ENCODE measurements at regions of chr9 and their contacts with region 1.

Region 1: DNA sequence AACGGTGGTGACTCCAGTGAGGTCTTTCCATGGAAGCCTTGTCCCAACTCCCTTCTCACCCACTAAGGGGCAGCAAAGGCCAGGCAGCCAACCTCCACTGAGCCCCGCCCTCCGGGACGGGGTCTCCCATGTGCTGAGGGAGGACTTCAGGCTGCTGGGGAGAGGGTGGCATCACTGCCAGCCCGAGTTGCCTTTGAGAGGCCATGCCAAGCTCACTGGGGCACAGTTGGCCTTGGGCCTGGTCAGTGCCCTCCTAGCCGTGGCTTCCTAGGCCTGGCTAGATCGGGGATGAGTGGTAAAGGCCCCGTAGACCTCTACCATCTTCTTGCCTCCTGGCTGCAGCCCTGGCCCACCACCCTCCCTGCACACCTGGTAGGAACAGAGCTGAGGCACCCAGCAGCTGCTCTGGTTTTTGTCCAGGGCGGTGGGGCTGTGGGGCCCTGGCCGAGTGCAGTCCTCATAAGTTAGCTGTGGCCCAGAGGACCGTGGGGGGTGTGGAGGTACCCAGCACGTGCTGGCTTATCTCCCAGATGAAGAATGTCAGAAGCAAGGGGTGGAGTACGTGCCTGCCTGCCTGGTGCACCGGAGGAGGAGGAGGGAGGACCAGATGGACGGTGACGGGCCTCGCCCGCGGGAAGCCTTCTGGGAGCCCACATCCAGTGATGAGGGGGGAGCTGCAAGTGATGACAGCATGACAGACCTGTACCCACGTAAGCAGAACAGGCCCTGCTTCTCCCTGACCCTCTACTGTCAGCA is 3.2 kb downstream of the SURF2 start:
- ATAC-seq: peak in 1 of 8 experiments; percentile 7
- H3K4me3 ChIP-seq: no peak overlapping the region
- H3K27ac ChIP-seq: no peak overlapping the region
- H3K4me1 ChIP-seq: peaks cover 15% of the 10 kb centered on the region in 2 donors

Region 2: DNA sequence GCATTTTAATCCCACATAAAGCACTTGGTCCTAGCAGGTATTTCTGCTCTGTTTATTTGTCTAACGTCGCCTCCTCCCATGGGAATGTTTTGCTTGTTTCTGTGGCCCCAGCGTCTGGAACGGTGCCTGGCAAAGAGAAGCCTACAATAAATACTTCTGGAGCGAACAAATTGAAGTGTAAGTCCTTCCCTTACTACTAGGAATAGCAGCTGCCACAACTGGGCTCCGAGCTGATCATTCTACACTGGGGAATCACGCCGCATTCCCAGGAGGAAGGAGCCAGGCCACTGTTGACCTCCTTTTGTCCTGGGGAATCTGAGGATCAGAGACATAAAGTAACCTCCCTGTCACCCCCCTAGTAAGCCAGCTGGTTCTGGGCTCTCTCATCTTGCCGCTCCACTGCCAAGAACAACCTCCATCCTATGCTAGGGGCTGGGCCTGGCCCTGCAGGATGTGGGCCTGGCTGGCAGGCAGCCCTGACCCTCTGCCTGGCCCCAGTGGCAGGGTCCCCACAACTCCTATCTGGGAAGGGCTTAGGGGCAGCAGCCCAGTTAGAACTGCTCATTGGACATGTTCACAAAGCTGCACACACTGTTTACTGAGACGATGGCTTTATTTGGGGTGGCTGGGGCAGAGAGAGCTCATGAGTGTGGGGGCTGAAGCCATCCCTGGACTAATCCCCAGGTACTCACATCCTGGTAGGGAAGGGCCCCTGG is 606.6 kb before region 1 on chr9:
- in situ Hi-C with region 1: no loop called
- ATAC-seq: peak in 1 of 8 experiments; percentile 41
- H3K4me3 ChIP-seq: no peak overlapping the region
- H3K27ac ChIP-seq: no peak overlapping the region
- H3K4me1 ChIP-seq: peaks cover 0 to 5% of the 10 kb centered on the region in 2 donors

Region 3: GRCh38 chr9:132877824-132878694 is 481.5 kb before region 1 on chr9 and contains the start of gene AK8:
- in situ Hi-C with region 1: no loop called
- ATAC-seq: peak; percentile 81 to 91 (median 86)
- H3K4me3 ChIP-seq: peak within 1 kb of the TSS; percentile 72 to 97 (median 84)
- H3K27ac ChIP-seq: no peak within 1 kb of the TSS
- H3K4me1 ChIP-seq: peaks cover 5 to 6% of the 10 kb centered on the region in 2 donors
- total RNA-seq, gene AK8: 0.64 to 6.6 (median 0.95) TPM

Region 4: DNA sequence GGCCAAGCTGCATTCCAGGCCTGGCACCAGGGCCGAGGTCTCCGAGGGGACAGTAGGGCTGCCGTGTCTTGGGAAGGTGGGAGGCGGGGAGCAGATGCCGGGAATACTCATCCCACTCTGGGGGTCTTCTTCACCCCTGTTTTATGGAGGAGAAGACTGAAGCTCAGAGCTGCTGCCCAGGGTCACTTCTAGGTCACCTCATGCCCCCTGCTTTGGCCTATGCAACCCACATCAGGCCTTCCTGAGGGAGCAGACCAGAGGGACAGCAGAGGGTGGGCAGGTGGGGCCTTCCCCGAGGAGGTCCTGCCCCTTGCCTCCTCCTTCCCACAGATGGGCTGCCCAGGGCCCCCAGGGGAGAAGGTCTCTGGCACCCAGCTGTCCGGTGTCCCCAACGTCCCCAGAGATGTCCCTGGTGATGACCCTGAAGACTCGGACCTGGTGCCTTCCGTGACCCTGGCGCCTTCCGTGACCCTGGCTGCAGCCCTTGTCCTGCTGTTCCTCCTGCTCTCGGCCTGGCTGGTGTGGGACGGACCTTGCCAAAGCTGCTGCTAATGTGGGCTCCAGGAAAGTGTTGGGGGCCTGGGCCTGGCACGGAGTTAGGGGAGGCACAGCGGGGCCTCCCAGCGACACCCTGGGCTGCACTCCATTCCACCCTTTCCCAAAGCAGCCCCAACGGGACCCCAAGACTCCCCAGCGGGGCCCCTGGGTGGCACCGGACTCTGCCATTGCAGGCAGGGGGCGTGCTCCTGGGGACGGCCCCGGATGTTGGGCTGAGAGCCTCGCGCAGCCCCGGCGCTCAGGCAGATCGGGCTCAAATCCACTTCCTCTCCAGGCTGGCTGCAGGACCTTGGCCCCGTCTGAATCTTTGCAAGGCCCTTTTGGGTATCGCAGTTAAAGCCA is 126.0 kb after region 1 on chr9:
- in situ Hi-C with region 1: loop called in 1 of 9 experiments (anchors 10 kb)
- ATAC-seq: peak in 5 of 8 experiments; percentile 6 to 67 (median 12)
- H3K4me3 ChIP-seq: no peak overlapping the region
- H3K27ac ChIP-seq: no peak overlapping the region
- H3K4me1 ChIP-seq: peaks cover 7 to 8% of the 10 kb centered on the region in 2 donors

Region 5: DNA sequence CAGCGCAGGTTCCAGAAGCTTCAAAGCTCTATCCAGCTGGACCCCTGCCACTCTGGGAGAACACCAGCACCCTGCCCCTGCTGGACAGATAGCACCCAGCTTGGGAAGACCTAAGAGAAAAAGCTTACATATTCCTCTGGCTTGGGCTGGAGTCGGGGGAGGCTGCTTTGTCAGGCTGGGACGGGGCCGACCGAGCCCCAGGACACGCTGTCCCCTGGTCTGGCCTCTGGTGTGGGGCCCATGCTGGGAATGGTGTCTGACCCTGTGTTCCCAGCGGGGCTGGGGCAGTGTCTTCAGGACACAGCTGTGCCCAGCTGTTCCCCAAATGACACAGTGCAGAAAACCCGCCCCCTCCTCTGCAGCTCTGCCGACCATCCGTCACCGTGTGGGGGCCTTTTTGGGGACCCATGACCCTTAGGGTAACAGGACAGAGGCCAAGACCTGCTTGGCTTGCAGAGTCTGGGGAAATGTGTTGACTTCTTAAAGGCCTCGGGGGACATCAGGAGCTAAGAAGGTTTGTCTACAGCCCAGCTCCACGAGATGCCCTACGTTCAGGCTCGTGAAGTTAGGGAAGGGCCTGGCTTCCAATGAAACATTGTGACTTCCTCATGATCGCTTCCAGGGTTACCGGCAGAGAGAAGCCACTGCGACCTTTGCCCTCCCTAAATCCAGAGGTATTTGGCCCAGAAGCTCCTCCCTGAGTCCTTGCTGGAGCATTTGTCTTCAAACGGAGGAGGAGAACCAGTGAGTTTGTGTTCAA is 139.7 kb after region 1 on chr9:
- in situ Hi-C with region 1: no loop called
- ATAC-seq: no peak
- H3K4me3 ChIP-seq: no peak overlapping the region
- H3K27ac ChIP-seq: no peak overlapping the region
- H3K4me1 ChIP-seq: peaks cover 6 to 9% of the 10 kb centered on the region in 2 donors

Measured in motor neuron (in vitro differentiated cells).